Activated naive CD4-positive, alpha-beta T cell treated with anti-CD3 and anti-CD28 coated beads, Interleukin-2, amount 10 ng/mL, durations not matched to agents 7 days and 5 days (primary cell): ENCODE measurements at regions of chr11 and their contacts with region 1.

Region 1: DNA sequence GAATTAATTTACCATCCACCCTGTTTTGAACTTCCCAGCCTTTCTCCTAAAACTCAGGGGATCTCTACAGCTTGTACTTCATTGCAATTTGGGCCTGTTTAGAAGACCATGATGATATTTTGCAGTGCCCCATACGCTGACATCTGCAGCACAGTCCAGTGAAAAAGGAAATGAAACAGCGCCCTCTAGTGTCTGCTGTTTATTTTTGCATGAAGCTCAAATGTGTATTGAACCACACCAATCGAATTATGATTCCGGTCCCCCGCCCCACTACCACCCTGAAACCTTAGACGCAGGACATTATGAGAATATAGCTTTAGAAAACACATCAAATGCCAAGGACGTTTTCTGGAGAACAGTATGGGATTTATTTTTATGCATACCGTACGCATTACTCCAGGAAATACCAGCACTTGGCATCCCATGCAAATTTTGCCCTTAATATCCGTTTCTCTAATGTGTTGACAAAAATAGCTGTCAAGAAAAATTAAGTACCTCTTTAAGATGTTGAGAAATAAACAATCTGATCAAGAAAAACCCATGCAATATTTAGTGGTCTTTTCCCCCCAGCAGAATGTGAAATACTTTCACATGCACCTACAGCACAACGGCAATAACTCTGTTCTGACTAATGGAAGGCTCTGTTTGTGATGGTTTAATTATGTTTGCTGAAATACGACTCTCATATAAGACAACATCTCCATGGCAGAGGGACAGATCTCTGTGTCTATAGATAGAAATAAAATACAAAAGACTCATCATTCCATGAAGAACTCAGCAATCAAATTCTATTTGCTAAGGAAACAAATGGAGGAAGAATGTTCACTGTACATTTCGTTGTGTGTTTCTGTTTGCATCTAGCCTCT is 93.9 kb downstream of the TECTA start:
- DNase-seq: peak; percentile 70
- H3K4me3 Mint-ChIP-seq: no peak overlapping the region
- H3K27ac Mint-ChIP-seq: no peak overlapping the region
- H3K4me1 Mint-ChIP-seq: peaks cover 6% of the 10 kb centered on the region
- H3K27me3 Mint-ChIP-seq: peaks cover 17% of the 10 kb centered on the region

Region 2: DNA sequence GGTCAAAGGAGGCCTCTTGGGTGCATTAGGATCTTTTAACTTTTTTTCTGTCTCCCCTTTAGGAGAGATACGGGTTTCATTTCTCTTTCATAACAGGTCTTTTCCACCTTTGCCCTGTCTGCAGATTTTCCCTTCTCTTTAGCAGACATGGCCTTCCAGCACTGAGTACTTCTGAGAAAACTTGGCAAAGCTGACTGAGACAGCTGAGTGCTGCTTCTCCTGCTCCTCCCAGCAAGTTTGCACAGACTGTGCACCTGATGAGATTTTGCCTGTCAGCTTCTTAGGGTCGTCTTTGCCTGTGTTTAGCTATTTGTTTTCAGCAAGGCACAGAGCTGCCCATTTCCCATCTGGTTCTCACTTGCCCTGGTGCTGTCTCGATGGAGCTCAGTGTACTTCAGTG is 258.6 kb before region 1 on chr11:
- CTCF ChIA-PET with region 1: interaction called, 12 read pairs
- DNase-seq: no peak
- H3K4me3 Mint-ChIP-seq: no peak overlapping the region
- H3K27ac Mint-ChIP-seq: no peak overlapping the region
- H3K4me1 Mint-ChIP-seq: no peaks in the 10 kb centered on the region
- H3K27me3 Mint-ChIP-seq: peaks cover 27% of the 10 kb centered on the region